CD8-positive, alpha-beta T cell (primary cell): ENCODE measurements at regions of chr3 and their contacts with region 1.

Region 1: DNA sequence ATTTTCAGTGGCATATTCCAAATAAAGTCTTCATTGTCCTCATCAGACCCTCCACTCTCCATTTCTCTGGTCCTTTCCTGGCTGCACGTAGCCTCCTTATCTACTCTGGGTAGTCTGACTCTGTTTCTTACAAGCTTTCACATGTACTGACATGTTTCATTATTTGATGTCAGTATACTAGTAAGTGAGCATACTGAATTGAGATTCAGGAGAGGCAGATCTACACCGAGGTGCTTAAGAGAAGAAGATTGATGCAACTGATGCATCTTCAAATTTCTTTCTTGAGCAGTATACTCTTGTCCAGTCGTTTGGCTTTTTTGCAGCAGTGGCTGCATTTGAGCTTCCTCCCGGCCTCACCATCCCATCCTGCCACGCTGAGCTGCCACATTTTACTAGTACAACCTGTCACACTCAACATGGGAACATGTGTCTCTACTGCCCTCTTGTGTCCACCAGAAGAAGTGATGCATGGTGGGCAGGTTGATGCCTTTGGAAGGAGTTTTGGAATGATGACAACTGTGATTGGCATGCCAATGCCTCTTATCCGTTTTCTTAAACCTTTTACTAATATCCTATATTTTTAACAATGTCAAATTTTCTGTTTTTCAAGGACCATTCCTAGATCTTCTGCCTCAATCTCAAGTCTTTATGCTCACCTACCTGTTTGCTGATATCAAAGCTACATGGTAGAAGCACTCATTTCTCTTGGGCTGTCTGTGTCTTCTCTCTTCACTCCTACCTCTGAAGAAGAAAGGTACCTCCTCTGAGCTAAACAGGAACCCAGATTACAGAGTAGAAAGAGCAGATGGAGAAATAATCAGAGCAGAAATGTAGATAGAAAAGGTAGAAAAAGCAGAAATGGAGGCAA is 38.7 kb downstream of the GUCA1C start:
- DNase-seq: peak; percentile 13 to 82 (median 58)
- ATAC-seq: peak; percentile 96
- H3K4me3 ChIP-seq: no peak overlapping the region
- H3K4me3 Mint-ChIP-seq: no peak overlapping the region
- H3K27ac ChIP-seq: no peak overlapping the region
- H3K27ac Mint-ChIP-seq: no peak overlapping the region
- H3K4me1 ChIP-seq: no peaks in the 10 kb centered on the region
- H3K4me1 Mint-ChIP-seq: peaks cover 12% of the 10 kb centered on the region
- H3K27me3 ChIP-seq: no peaks in the 10 kb centered on the region
- H3K27me3 Mint-ChIP-seq: peaks cover 4% of the 10 kb centered on the region
- CTCF ChIP-seq: peak; percentile 89

Region 2: GRCh38 chr3:108489771-108490170 is 425.2 kb before region 1 on chr3:
- CTCF ChIA-PET with region 1: interaction called, 48 read pairs
- POLR2A ChIA-PET with region 1: interaction called, 3 read pairs
- intact Hi-C with region 1: loop called (anchors 1 kb)
- DNase-seq: peak in 7 of 9 experiments; percentile 7 to 80 (median 37)
- ATAC-seq: peak; percentile 93
- H3K4me3 ChIP-seq: no peak overlapping the region
- H3K4me3 Mint-ChIP-seq: no peak overlapping the region
- H3K27ac ChIP-seq: no peak overlapping the region
- H3K27ac Mint-ChIP-seq: no peak overlapping the region
- H3K4me1 ChIP-seq: no peaks in the 10 kb centered on the region
- H3K4me1 Mint-ChIP-seq: peaks cover 3% of the 10 kb centered on the region
- H3K27me3 ChIP-seq: peaks cover 0 to 2% of the 10 kb centered on the region in 2 experiments
- H3K27me3 Mint-ChIP-seq: peaks cover 3% of the 10 kb centered on the region
- CTCF ChIP-seq: peak; percentile 85

Region 3: DNA sequence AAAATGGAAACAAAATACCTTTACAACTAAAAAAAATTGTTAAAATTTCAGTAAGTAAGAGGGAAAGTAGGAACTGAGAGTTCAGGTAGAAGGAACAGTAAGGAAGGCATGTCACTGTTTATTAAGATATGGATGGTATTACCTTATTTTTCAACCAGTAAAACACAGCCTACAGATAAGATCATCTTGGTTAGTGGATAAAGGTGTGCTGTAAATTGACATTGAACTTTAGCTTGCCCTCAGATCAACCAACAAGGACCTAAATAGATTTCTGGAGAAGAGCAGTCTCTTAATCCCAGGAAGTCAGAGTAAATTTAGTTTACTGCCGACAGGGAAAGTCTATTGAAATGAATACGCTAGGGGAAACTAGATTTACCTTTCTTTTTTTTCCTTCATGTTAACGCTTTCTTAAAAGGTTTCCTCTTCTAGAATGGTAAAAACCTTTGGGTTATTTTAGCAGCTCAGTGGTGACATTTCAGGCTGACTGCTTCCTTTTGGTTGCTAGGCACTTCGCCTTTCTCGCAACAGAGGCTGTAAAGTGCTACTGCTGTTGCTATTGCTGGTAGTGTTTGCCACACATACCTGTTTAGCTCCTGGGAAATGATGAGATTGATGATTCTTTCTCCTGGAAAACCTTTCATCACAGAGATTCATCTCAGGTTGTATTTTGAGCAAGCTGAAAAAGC is 312.6 kb before region 1 on chr3:
- CTCF ChIA-PET with region 1: interaction called, 10 read pairs
- POLR2A ChIA-PET with region 1: interaction called, 3 read pairs
- intact Hi-C with region 1: no loop called
- DNase-seq: peak in 8 of 9 experiments; percentile 20 to 79 (median 46)
- ATAC-seq: peak; percentile 87
- H3K4me3 ChIP-seq: peak overlapping the region; percentile 11 to 31
- H3K4me3 Mint-ChIP-seq: peak overlapping the region; percentile 80
- H3K27ac ChIP-seq: peak overlapping the region; percentile 32 to 75
- H3K27ac Mint-ChIP-seq: peak overlapping the region; percentile 94
- H3K4me1 ChIP-seq: peaks cover 45% of the 10 kb centered on the region
- H3K4me1 Mint-ChIP-seq: peaks cover 67% of the 10 kb centered on the region
- H3K27me3 ChIP-seq: no peaks in the 10 kb centered on the region
- H3K27me3 Mint-ChIP-seq: no peaks in the 10 kb centered on the region
- CTCF ChIP-seq: no peak

Region 4: GRCh38 chr3:108673988-108674661 is 240.9 kb before region 1 on chr3:
- CTCF ChIA-PET with region 1: interaction called, 185 read pairs
- POLR2A ChIA-PET with region 1: no interaction called
- intact Hi-C with region 1: no loop called
- DNase-seq: no peak
- ATAC-seq: no peak
- H3K4me3 ChIP-seq: no peak overlapping the region
- H3K4me3 Mint-ChIP-seq: no peak overlapping the region
- H3K27ac ChIP-seq: no peak overlapping the region
- H3K27ac Mint-ChIP-seq: no peak overlapping the region
- H3K4me1 ChIP-seq: no peaks in the 10 kb centered on the region
- H3K4me1 Mint-ChIP-seq: peaks cover 2% of the 10 kb centered on the region
- H3K27me3 ChIP-seq: no peaks in the 10 kb centered on the region
- H3K27me3 Mint-ChIP-seq: no peaks in the 10 kb centered on the region
- CTCF ChIP-seq: no peak

Region 5: DNA sequence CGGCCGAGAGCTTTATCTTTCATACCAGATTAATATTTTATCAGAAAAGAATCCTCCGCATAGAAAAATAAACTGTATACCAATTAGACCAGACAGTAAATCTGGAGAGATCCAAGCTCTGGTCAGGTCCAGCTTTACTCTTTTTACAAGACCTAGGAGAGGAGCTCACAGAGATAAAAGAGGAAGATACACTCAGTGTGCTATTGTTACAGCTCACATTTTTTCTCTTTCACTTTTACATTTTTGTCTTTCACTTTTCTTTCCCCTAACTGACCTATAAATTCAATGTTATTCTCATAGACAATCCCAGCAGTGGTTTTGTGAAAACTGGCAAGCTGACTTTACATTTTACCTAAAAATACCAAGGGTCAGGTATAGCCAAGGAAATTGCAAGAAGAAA is 17.1 kb before region 1 on chr3:
- CTCF ChIA-PET with region 1: interaction called, 11 read pairs
- POLR2A ChIA-PET with region 1: no interaction called
- intact Hi-C with region 1: no loop called
- DNase-seq: no peak
- ATAC-seq: no peak
- H3K4me3 ChIP-seq: no peak overlapping the region
- H3K4me3 Mint-ChIP-seq: no peak overlapping the region
- H3K27ac ChIP-seq: no peak overlapping the region
- H3K27ac Mint-ChIP-seq: no peak overlapping the region
- H3K4me1 ChIP-seq: no peaks in the 10 kb centered on the region
- H3K4me1 Mint-ChIP-seq: peaks cover 9% of the 10 kb centered on the region
- H3K27me3 ChIP-seq: no peaks in the 10 kb centered on the region
- H3K27me3 Mint-ChIP-seq: no peaks in the 10 kb centered on the region
- CTCF ChIP-seq: no peak

Region 6: GRCh38 chr3:108966773-108967172 is 51.8 kb after region 1 on chr3:
- CTCF ChIA-PET with region 1: no interaction called
- POLR2A ChIA-PET with region 1: no interaction called
- intact Hi-C with region 1: no loop called
- DNase-seq: no peak
- ATAC-seq: no peak
- H3K4me3 ChIP-seq: no peak overlapping the region
- H3K4me3 Mint-ChIP-seq: no peak overlapping the region
- H3K27ac ChIP-seq: no peak overlapping the region
- H3K27ac Mint-ChIP-seq: no peak overlapping the region
- H3K4me1 ChIP-seq: no peaks in the 10 kb centered on the region
- H3K4me1 Mint-ChIP-seq: no peaks in the 10 kb centered on the region
- H3K27me3 ChIP-seq: no peaks in the 10 kb centered on the region
- H3K27me3 Mint-ChIP-seq: no peaks in the 10 kb centered on the region
- CTCF ChIP-seq: no peak

Region 7: GRCh38 chr3:109548192-109548938 is 633.4 kb after region 1 on chr3:
- CTCF ChIA-PET with region 1: no interaction called
- POLR2A ChIA-PET with region 1: no interaction called
- intact Hi-C with region 1: no loop called
- DNase-seq: no peak
- ATAC-seq: no peak
- H3K4me3 ChIP-seq: no peak overlapping the region
- H3K4me3 Mint-ChIP-seq: no peak overlapping the region
- H3K27ac ChIP-seq: no peak overlapping the region
- H3K27ac Mint-ChIP-seq: no peak overlapping the region
- H3K4me1 ChIP-seq: no peaks in the 10 kb centered on the region
- H3K4me1 Mint-ChIP-seq: no peaks in the 10 kb centered on the region
- H3K27me3 ChIP-seq: no peaks in the 10 kb centered on the region
- H3K27me3 Mint-ChIP-seq: peaks cover 2% of the 10 kb centered on the region
- CTCF ChIP-seq: no peak